ENCODE measurements at regions of chr12 and their contacts with region 1.

Region 1: GRCh38 chr12:14629832-14630710 is 62.4 kb upstream of the PLBD1 start:
- DNase-seq: peak; percentile 77
- H3K4me3 Mint-ChIP-seq: no peak overlapping the region
- H3K27ac Mint-ChIP-seq: no peak overlapping the region
- H3K4me1 Mint-ChIP-seq: no peaks in the 10 kb centered on the region
- H3K27me3 Mint-ChIP-seq: no peaks in the 10 kb centered on the region
- CTCF ChIP-seq: peak; percentile 88

Region 2: GRCh38 chr12:14327711-14328381 is 302.2 kb before region 1 on chr12:
- CTCF ChIA-PET with region 1: no interaction called
- POLR2A ChIA-PET with region 1: no interaction called
- intact Hi-C with region 1: no loop called
- DNase-seq: no peak
- H3K4me3 Mint-ChIP-seq: no peak overlapping the region
- H3K27ac Mint-ChIP-seq: no peak overlapping the region
- H3K4me1 Mint-ChIP-seq: no peaks in the 10 kb centered on the region
- H3K27me3 Mint-ChIP-seq: no peaks in the 10 kb centered on the region
- CTCF ChIP-seq: no peak

Region 3: GRCh38 chr12:14572401-14572800 is 57.7 kb before region 1 on chr12:
- CTCF ChIA-PET with region 1: no interaction called
- POLR2A ChIA-PET with region 1: no interaction called
- intact Hi-C with region 1: no loop called
- DNase-seq: no peak
- H3K4me3 Mint-ChIP-seq: no peak overlapping the region
- H3K27ac Mint-ChIP-seq: no peak overlapping the region
- H3K4me1 Mint-ChIP-seq: no peaks in the 10 kb centered on the region
- H3K27me3 Mint-ChIP-seq: no peaks in the 10 kb centered on the region
- CTCF ChIP-seq: no peak

Region 4: GRCh38 chr12:14612898-14613445 is 17.1 kb before region 1 on chr12:
- CTCF ChIA-PET with region 1: interaction called, 38 read pairs
- POLR2A ChIA-PET with region 1: no interaction called
- intact Hi-C with region 1: no loop called
- DNase-seq: no peak
- H3K4me3 Mint-ChIP-seq: no peak overlapping the region
- H3K27ac Mint-ChIP-seq: no peak overlapping the region
- H3K4me1 Mint-ChIP-seq: no peaks in the 10 kb centered on the region
- H3K27me3 Mint-ChIP-seq: no peaks in the 10 kb centered on the region
- CTCF ChIP-seq: no peak

Region 5: GRCh38 chr12:14664510-14664909 is 34.4 kb after region 1 on chr12:
- CTCF ChIA-PET with region 1: interaction called, 63 read pairs
- POLR2A ChIA-PET with region 1: no interaction called
- intact Hi-C with region 1: loop called (anchors 1 kb)
- DNase-seq: peak; percentile 53
- H3K4me3 Mint-ChIP-seq: no peak overlapping the region
- H3K27ac Mint-ChIP-seq: no peak overlapping the region
- H3K4me1 Mint-ChIP-seq: peaks cover 5% of the 10 kb centered on the region
- H3K27me3 Mint-ChIP-seq: no peaks in the 10 kb centered on the region
- CTCF ChIP-seq: peak; percentile 58

Region 6: GRCh38 chr12:14769969-14770495 is 140.0 kb after region 1 on chr12:
- CTCF ChIA-PET with region 1: interaction called, 3 read pairs
- POLR2A ChIA-PET with region 1: interaction called, 4 read pairs
- intact Hi-C with region 1: loop called (anchors 2 kb)
- DNase-seq: peak; percentile 81
- H3K4me3 Mint-ChIP-seq: peak overlapping the region; percentile 98
- H3K27ac Mint-ChIP-seq: peak overlapping the region; percentile 98
- H3K4me1 Mint-ChIP-seq: peaks cover 11% of the 10 kb centered on the region
- H3K27me3 Mint-ChIP-seq: no peaks in the 10 kb centered on the region
- CTCF ChIP-seq: peak; percentile 62

Region 7: DNA sequence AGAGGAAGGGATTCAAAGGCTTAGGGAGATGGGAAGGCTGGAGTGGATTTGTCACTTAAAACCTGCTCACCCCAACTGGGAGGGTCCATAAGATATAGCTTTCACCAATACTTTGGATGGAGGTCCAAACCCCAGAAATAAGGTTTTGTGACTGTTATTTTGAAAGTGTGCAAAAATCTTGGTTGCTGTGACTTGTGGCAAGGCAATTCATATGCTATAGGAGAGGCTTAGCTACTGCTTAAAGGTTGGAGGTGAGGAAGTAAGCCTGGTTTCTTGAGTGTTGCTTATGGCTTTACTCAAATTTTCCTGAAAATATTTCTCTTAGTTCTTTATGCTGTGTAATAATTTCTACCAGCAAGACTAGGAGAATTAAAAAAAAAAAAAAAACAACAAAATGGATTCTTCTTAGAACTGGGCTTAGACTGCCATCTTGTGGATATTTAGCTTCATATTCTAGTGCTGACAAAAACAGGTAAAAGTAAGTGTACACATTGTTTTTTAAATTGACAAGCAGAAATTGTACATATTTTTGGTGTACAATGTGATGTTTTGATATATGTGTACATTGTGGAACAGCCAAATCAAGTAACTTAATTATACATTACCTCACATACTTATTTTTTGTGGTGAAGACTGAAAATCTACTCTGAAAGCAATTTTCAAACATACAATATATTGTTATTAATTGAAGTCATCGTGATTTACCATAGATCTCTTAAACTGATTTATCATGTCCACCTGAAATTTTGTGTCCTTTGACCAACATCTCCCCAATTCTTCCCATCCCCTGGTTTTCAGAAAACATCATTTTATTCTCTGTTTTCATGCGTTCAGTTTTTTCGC is 365.7 kb after region 1 on chr12:
- CTCF ChIA-PET with region 1: interaction called, 3 read pairs
- POLR2A ChIA-PET with region 1: no interaction called
- intact Hi-C with region 1: loop called (anchors 1 kb)
- DNase-seq: peak; percentile 71
- H3K4me3 Mint-ChIP-seq: no peak overlapping the region
- H3K27ac Mint-ChIP-seq: peak overlapping the region; percentile 59
- H3K4me1 Mint-ChIP-seq: peaks cover 20% of the 10 kb centered on the region
- H3K27me3 Mint-ChIP-seq: no peaks in the 10 kb centered on the region
- CTCF ChIP-seq: peak; percentile 53

Measured in MCF 10A (cell line).